ENCODE measurements at regions of chrX and their contacts with region 1.

Region 1: GRCh38 chrX:11040405-11040804 is 70.7 kb upstream of the HCCS start:
- ATAC-seq: no peak
- H3K4me3 ChIP-seq: no peak overlapping the region
- H3K27ac ChIP-seq: no peak overlapping the region
- H3K4me1 ChIP-seq: no peaks in the 10 kb centered on the region

Region 2: DNA sequence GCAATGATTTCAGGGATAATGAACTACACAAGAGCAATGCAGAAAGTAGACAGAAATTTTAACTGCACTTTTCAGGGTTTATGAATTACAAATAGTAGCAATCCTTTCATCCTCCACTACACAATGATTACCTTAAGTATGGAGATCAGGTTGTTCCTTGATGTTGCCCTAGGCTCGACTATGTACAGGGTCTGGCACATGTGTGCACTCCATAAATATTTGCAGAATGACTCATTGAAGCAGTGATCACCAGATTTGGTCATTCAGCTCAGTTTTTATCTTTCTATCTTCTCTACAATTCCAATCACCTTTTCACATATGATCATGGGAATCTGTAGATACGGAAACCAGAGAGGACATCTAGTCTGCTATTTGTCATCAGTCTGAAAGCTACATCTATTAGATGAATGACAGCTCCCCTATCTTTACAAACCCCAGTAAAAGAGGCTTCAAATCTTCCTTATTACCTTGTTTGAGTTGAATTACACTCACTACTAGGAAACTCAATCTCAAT is 101.0 kb before region 1 on chrX:
- in situ Hi-C with region 1: loop called in 1 of 9 experiments (anchors 25 kb)
- ATAC-seq: peak in 4 of 8 experiments; percentile 16 to 84 (median 44)
- H3K4me3 ChIP-seq: no peak overlapping the region
- H3K27ac ChIP-seq: no peak overlapping the region
- H3K4me1 ChIP-seq: no peaks in the 10 kb centered on the region

Region 3: GRCh38 chrX:11210415-11210801 is 170.0 kb after region 1 on chrX:
- in situ Hi-C with region 1: no loop called
- ATAC-seq: no peak
- H3K4me3 ChIP-seq: no peak overlapping the region
- H3K27ac ChIP-seq: no peak overlapping the region
- H3K4me1 ChIP-seq: no peaks in the 10 kb centered on the region

Measured in motor neuron (in vitro differentiated cells).